ENCODE measurements at regions of chr6 and their contacts with region 1.

Region 1: GRCh38 chr6:166635013-166635970 is 8.2 kb upstream of the RPS6KA2 start:
- DNase-seq: no peak
- ATAC-seq: no peak
- H3K4me3 ChIP-seq: no peak overlapping the region
- H3K4me3 Mint-ChIP-seq: no peak overlapping the region
- H3K27ac ChIP-seq: no peak overlapping the region
- H3K27ac Mint-ChIP-seq: no peak overlapping the region
- H3K4me1 ChIP-seq: peaks cover 5% of the 10 kb centered on the region
- H3K4me1 Mint-ChIP-seq: peaks cover 3% of the 10 kb centered on the region
- H3K27me3 ChIP-seq: peaks cover 0 to 4% of the 10 kb centered on the region in 2 experiments
- H3K27me3 Mint-ChIP-seq: peaks cover 51% of the 10 kb centered on the region
- CTCF ChIP-seq: no peak

Region 2: DNA sequence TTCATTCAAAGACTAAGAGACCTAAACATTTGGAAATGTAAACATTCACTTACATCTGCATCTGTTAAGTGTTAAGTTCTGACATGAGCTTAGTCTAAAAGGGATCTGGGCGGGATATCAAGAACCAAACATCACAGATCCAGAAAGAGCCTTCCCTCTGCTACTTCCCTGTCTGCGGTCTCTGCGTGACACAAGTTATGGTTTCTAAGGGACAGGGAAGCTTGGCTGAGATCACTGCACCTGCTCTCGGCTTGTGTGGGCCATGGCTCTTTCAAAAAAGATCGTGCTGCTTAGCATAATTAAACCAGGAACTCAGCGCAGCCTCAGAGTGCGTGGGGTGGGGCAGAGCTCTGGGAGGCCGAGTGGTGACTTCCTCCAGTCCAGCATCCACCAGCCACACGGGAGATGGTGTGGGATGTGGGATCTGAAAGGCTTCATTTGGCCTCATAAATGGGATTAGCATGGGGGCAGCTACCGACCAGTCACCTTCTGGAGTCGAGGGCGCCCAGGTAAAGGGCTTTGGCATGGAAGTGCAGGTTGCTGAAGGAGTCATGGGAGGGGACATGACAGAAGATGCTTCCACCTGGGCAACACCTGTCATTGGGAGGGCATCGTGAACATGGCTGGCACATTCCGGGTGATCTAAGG is 32.1 kb before region 1 on chr6:
- CTCF ChIA-PET with region 1: no interaction called
- POLR2A ChIA-PET with region 1: no interaction called
- intact Hi-C with region 1: loop called in 1 of 2 experiments (anchors 1 kb)
- DNase-seq: no peak
- ATAC-seq: no peak
- H3K4me3 ChIP-seq: no peak overlapping the region
- H3K4me3 Mint-ChIP-seq: no peak overlapping the region
- H3K27ac ChIP-seq: no peak overlapping the region
- H3K27ac Mint-ChIP-seq: no peak overlapping the region
- H3K4me1 ChIP-seq: no peaks in the 10 kb centered on the region
- H3K4me1 Mint-ChIP-seq: no peaks in the 10 kb centered on the region
- H3K27me3 ChIP-seq: no peaks in the 10 kb centered on the region
- H3K27me3 Mint-ChIP-seq: no peaks in the 10 kb centered on the region
- CTCF ChIP-seq: no peak

Measured in CD8-positive, alpha-beta T cell (primary cell).